GM12878 (cell line): ENCODE measurements at regions of chr22 and their contacts with region 1.

Region 1: GRCh38 chr22:21938071-21938822 is 14.4 kb downstream of the PPM1F start:
- DNase-seq: peak; percentile 62
- ATAC-seq: peak; percentile 99
- H3K4me3 ChIP-seq: peak overlapping the region; percentile 76
- H3K27ac ChIP-seq: peak overlapping the region; percentile 59
- H3K4me1 ChIP-seq: peaks cover 16% of the 10 kb centered on the region
- H3K27me3 ChIP-seq: no peaks in the 10 kb centered on the region
- CTCF ChIP-seq: peak; percentile 98 to 100 (median 99)
- EP300 ChIP-seq: 0 out of 4 replicates have a peak, but pooled peaks of 1 of the 2 experiments have one; percentile 16
- POLR2A ChIP-seq: peak; percentile 85
- RAD21 ChIP-seq: peak; percentile 85

Region 2: GRCh38 chr22:21641789-21642583 is 296.3 kb before region 1 on chr22 and contains the start of gene SDF2L1:
- CTCF ChIA-PET with region 1: interaction called, 16 read pairs
- POLR2A ChIA-PET with region 1: no interaction called
- RAD21 ChIA-PET with region 1: interaction called, 3 read pairs
- SMC1A ChIA-PET with region 1: no interaction called
- in situ Hi-C with region 1: no loop called
- intact Hi-C with region 1: no loop called
- DNase-seq: peak; percentile 88
- ATAC-seq: peak; percentile 98
- H3K4me3 ChIP-seq: peak within 1 kb of the TSS; percentile 97
- H3K27ac ChIP-seq: peak within 1 kb of the TSS; percentile 88
- H3K4me1 ChIP-seq: peaks cover 15% of the 10 kb centered on the region
- H3K27me3 ChIP-seq: no peaks in the 10 kb centered on the region
- CTCF ChIP-seq: no peak
- EP300 ChIP-seq: no peak
- POLR2A ChIP-seq: peak; percentile 95
- RAD21 ChIP-seq: no peak
- polyA plus RNA-seq, gene SDF2L1: 3.0 to 17.8 TPM

Region 3: GRCh38 chr22:21707677-21708076 is 230.6 kb before region 1 on chr22:
- CTCF ChIA-PET with region 1: interaction called, 36 read pairs
- POLR2A ChIA-PET with region 1: no interaction called
- RAD21 ChIA-PET with region 1: interaction called, 3 read pairs
- SMC1A ChIA-PET with region 1: interaction called, 7 read pairs
- in situ Hi-C with region 1: no loop called
- intact Hi-C with region 1: no loop called
- DNase-seq: no peak
- ATAC-seq: no peak; the same call in 2 of the 3 replicates
- H3K4me3 ChIP-seq: no peak overlapping the region
- H3K27ac ChIP-seq: no peak overlapping the region
- H3K4me1 ChIP-seq: no peaks in the 10 kb centered on the region
- H3K27me3 ChIP-seq: no peaks in the 10 kb centered on the region
- CTCF ChIP-seq: no peak
- EP300 ChIP-seq: no peak
- POLR2A ChIP-seq: no peak
- RAD21 ChIP-seq: no peak

Region 4: DNA sequence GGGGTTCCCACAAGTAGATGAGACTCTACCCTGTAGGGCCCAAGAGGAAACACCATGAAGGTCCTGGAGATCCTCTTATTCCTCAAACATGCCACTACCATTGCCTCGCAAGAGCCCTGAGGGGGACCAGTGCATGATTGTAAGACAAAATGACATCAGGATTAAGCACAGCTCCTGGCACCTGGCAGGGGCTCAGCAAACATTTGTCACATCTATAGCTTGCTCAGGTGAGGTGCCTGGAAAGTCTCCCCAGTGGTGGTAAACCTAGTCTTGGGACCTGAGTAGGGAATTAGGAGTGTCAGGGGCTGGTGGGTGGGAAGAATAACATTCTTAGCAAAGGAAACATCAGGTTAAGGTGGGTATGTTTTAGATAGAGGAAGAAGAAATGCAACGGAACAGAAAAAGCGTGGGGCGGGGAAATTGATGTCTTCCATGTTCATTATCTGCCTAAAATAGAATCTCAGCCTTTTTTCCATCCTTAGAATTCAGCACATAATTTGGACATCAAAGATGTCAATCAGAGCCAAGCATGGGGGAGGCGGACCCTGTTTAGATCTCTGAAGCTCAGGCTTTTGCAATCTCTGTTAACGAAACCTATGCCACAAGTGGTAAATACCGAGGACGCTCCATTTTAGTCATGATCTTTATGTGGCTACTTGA is 203.6 kb before region 1 on chr22:
- CTCF ChIA-PET with region 1: no interaction called
- POLR2A ChIA-PET with region 1: no interaction called
- RAD21 ChIA-PET with region 1: no interaction called
- SMC1A ChIA-PET with region 1: no interaction called
- in situ Hi-C with region 1: no loop called
- intact Hi-C with region 1: loop called (anchors 5 kb)
- DNase-seq: no peak
- ATAC-seq: 0 out of 3 replicates have a peak, but pooled peaks have one; percentile 13
- H3K4me3 ChIP-seq: peak overlapping the region; percentile 87
- H3K27ac ChIP-seq: peak overlapping the region; percentile 25; the same call in 1 of the 2 replicates
- H3K4me1 ChIP-seq: peaks cover 5% of the 10 kb centered on the region; the same call in 1 of the 2 replicates
- H3K27me3 ChIP-seq: no peaks in the 10 kb centered on the region
- CTCF ChIP-seq: no peak
- EP300 ChIP-seq: no peak
- POLR2A ChIP-seq: no peak
- RAD21 ChIP-seq: no peak

Region 5: DNA sequence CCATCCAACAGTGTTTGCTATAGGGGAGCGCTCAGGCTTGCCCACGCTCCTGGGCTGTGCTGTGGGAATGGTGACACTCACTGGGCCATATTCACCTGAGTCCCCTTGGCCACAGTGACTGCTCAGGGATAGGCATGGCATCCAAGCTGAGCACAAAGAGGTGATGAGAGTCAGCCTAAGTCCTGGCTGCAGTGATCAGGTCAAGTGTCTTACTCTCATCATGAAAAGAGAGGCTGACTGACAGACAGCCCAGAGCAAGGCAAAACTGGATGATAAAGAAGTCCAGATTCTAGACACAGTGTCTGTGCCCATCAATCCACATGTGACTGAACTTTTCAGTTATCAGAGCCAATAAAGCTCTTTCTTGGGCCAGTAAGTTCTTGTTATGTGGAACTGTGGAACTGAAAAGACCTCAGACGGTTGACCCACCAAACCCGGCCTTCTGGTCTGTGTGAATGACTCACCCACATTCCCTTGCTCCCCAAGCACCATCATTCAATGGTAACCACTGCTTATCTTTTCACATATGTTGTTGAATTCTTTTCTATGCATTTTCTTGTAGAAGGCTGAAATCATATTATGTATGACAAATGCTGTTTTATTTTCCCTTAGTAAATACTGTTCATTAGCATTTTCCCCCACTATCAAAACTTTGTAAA is 159.4 kb before region 1 on chr22:
- CTCF ChIA-PET with region 1: interaction called, 5 read pairs
- POLR2A ChIA-PET with region 1: no interaction called
- RAD21 ChIA-PET with region 1: no interaction called
- SMC1A ChIA-PET with region 1: interaction called, 4 read pairs
- in situ Hi-C with region 1: no loop called
- intact Hi-C with region 1: loop called (anchors 10 kb)
- DNase-seq: no peak
- ATAC-seq: no peak
- H3K4me3 ChIP-seq: no peak overlapping the region
- H3K27ac ChIP-seq: no peak overlapping the region
- H3K4me1 ChIP-seq: no peaks in the 10 kb centered on the region
- H3K27me3 ChIP-seq: no peaks in the 10 kb centered on the region
- CTCF ChIP-seq: no peak
- EP300 ChIP-seq: no peak
- POLR2A ChIP-seq: no peak
- RAD21 ChIP-seq: no peak

Region 6: GRCh38 chr22:21867528-21868266 is 70.5 kb before region 1 on chr22 and contains the start of gene MAPK1:
- CTCF ChIA-PET with region 1: interaction called, 3 read pairs
- POLR2A ChIA-PET with region 1: no interaction called
- RAD21 ChIA-PET with region 1: no interaction called
- SMC1A ChIA-PET with region 1: no interaction called
- in situ Hi-C with region 1: loop called (anchors 10 kb)
- intact Hi-C with region 1: loop called (anchors 5 kb)
- DNase-seq: peak; percentile 97
- ATAC-seq: peak; percentile 93
- H3K4me3 ChIP-seq: peak within 1 kb of the TSS; percentile 70
- H3K27ac ChIP-seq: peak within 1 kb of the TSS; percentile 97
- H3K4me1 ChIP-seq: peaks cover 12% of the 10 kb centered on the region
- H3K27me3 ChIP-seq: no peaks in the 10 kb centered on the region
- CTCF ChIP-seq: peak in 2 of 3 experiments; percentile 16 to 20; a peak in 4 of 6 replicates
- EP300 ChIP-seq: peak; percentile 76 to 78; a peak in 3 of 4 replicates
- POLR2A ChIP-seq: peak; percentile 96
- RAD21 ChIP-seq: no peak
- polyA plus RNA-seq, gene MAPK1: 12.1 to 19.3 TPM

Region 7: DNA sequence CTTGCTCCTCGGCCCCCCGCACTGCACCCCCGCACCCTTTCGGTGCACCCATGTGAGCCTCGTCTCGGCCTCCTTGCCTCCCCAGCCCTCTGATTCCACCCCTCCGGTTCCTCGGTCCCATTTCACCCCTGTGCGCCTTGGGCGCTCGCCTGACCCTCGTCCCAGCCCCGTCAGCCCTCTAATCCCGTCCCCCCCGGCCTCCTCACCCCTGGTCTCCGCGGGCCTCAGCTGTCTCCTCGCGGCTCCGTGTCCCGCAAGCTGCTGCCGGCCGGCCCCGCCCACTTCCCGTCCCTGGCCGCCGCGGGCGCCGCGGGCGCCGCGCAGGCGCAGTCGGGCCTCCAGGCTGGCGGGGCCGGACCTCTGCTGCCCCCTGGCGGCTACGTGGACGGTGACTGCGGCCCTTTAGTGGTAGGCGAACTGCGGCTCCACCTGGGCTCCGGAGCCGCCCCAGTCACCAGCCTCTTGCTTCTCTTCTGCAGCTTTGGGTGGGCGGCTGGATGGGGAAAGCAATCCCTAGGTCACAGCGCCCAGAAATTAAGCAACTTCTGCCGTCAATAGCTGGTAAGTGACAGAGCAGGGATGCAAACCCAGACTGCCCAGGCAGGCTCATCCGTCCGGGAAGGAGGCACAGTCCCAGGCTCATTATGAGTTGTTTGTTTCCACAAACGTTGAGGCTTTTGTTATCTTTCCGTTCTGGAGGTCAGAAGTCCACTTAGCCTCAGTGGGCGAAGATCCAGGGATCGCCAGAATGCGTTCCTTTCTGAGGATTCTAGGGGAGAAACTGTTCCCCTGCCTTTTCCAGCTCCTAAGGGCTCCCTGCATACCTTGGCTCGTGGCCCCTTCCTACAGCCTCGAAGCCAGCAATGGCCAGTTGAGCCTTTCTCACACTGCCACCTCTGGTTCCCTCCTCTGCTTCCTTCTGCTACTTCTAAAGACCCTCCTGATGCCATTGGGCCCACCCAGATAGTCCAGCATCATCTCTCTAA is 14.6 kb after region 1 on chr22 and contains the start of gene PPM1F:
- CTCF ChIA-PET with region 1: interaction called, 82 read pairs
- POLR2A ChIA-PET with region 1: no interaction called
- RAD21 ChIA-PET with region 1: interaction called, 17 read pairs
- SMC1A ChIA-PET with region 1: interaction called, 14 read pairs
- in situ Hi-C with region 1: no loop called
- intact Hi-C with region 1: loop called (anchors 2 kb)
- DNase-seq: peak; percentile 8
- ATAC-seq: peak; percentile 90
- H3K4me3 ChIP-seq: peak within 1 kb of the TSS; percentile 81
- H3K27ac ChIP-seq: no peak within 1 kb of the TSS; the same call in 1 of the 2 replicates
- H3K4me1 ChIP-seq: no peaks in the 10 kb centered on the region; the same call in 1 of the 2 replicates
- H3K27me3 ChIP-seq: no peaks in the 10 kb centered on the region
- CTCF ChIP-seq: peak; percentile 78 to 92 (median 87); a peak in 5 of 6 replicates
- EP300 ChIP-seq: no peak
- POLR2A ChIP-seq: peak; percentile 67
- RAD21 ChIP-seq: peak; percentile 75
- polyA plus RNA-seq, gene PPM1F: 0.55 to 2.0 TPM

Region 8: DNA sequence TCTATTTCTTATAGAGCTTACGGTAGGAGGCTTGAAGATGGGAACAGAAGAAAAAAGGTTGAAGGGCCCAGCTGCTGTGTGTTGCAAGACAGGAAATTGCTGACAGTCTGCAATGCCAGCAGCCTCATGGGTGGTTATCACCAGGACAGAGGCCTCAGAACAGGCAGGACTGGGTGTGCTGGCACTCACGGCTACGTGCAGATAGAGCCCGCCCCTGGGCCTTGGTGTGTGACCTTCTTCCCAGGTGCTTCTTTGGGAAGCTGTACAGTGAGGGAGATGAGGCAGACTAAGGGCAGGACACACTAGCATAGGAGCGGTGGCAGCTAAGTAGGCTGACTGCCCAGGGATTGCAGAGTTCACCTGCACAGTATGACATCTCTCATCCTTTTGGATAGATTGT is 608.2 kb after region 1 on chr22:
- CTCF ChIA-PET with region 1: no interaction called
- POLR2A ChIA-PET with region 1: no interaction called
- RAD21 ChIA-PET with region 1: no interaction called
- SMC1A ChIA-PET with region 1: no interaction called
- in situ Hi-C with region 1: no loop called
- intact Hi-C with region 1: no loop called
- DNase-seq: no peak
- ATAC-seq: no peak
- H3K4me3 ChIP-seq: no peak overlapping the region
- H3K27ac ChIP-seq: no peak overlapping the region
- H3K4me1 ChIP-seq: no peaks in the 10 kb centered on the region
- H3K27me3 ChIP-seq: no peaks in the 10 kb centered on the region
- CTCF ChIP-seq: no peak
- EP300 ChIP-seq: no peak
- POLR2A ChIP-seq: no peak
- RAD21 ChIP-seq: no peak